A673 (cell line): ENCODE measurements at regions of chrX and their contacts with region 1.

Region 1: DNA sequence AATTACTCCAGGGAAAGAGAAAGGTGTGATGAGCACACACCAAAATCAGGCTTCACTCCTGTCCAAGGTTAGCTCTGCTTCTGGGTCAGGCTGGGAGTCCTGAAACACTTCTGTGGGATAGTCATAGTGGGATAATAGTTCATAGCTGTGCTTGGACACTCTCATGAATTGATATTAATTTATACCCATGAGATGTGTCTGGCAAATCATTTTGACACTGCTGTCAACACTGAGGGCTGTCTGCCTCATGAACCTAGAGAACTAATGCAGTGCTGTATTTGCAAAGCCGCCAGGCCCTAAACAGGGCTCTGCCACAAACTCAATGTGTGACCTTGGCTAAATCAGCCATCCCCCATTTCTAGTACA is 24.5 kb upstream of the PGRMC1 start:
- DNase-seq: no peak
- H3K4me3 ChIP-seq: no peak overlapping the region
- H3K27ac ChIP-seq: no peak overlapping the region
- H3K4me1 ChIP-seq: no peaks in the 10 kb centered on the region
- H3K27me3 ChIP-seq: peaks cover 12% of the 10 kb centered on the region
- CTCF ChIP-seq: no peak

Region 2: GRCh38 chrX:118847676-118848075 is 364.0 kb before region 1 on chrX:
- CTCF ChIA-PET with region 1: no interaction called
- POLR2A ChIA-PET with region 1: no interaction called
- intact Hi-C with region 1: loop called (anchors 5 kb)
- DNase-seq: peak; percentile 72
- H3K4me3 ChIP-seq: no peak overlapping the region
- H3K27ac ChIP-seq: no peak overlapping the region
- H3K4me1 ChIP-seq: no peaks in the 10 kb centered on the region
- H3K27me3 ChIP-seq: no peaks in the 10 kb centered on the region
- CTCF ChIP-seq: peak; percentile 71

Region 3: DNA sequence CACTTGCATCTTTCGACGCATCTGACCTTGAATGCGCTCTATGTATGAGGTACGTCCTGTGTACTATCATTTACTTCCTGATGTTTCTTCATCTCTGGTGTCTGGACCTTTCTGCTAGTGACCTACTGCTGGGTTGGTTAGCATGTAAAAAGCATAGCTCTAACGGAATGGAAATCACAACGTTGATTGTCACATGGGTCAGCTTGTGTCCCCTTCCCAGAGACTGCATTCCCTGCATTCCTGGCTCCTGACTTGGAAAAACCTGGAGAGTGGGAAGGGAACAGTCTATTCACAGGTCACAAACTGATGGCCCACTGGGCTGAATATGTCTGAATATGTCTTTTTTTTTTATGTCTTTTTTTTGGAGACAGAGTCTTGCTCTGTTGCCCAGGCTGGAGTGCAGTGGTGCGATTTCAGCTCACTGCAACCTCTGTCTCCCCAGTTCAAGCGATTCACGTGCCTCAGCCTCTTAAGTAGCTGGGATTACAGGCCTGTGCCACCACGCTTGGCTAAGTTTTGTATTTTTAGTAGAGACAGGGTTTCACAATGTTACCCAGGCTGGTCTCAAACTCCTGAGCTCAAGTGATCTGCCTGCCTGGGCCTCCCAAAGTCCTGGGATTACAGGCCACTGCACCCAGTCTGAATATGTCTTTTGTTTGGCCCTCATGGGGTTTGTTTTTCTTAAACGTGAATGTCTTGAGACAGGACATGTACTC is 221.0 kb before region 1 on chrX:
- CTCF ChIA-PET with region 1: no interaction called
- POLR2A ChIA-PET with region 1: no interaction called
- intact Hi-C with region 1: no loop called
- DNase-seq: no peak
- H3K4me3 ChIP-seq: no peak overlapping the region
- H3K27ac ChIP-seq: no peak overlapping the region
- H3K4me1 ChIP-seq: no peaks in the 10 kb centered on the region
- H3K27me3 ChIP-seq: no peaks in the 10 kb centered on the region
- CTCF ChIP-seq: no peak

Region 4: DNA sequence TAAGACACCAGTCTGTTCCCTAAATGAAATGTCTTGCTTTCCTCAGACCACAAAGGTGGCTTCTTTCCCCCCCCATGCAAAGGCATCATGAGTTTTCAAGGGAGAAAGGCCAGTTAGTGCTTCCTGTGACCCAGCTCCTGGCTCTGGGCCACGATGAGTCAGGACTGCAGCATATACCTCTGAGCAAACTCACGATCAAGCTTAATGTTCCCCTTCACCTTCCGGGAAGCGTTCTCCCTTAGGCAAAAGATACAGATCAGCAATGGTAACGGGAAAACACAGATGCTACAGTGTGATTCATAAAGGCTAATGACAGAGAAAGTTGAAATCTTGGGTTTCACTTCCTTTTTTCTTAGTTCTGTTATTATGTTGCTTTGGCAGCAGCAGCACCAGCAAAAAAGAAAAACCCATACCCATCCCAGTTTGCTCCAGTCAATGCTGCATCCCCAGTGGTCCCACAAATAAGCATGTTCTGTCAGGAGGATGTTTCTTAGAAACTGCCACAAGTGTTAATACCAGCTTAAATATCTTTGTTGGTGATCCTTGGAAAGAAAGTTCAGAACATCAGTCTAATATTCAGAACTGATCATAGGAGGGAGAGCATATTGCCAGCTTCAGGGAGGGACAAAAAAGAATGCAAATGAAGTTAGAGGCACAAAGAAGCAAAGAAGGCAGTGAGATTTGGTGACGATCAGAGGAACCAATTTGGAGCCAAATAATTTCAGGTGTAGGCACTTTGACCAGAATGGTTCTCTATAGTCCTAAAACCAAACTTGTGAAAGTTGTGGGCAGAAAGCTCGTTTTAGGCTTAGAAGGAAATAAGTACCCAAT is 196.0 kb before region 1 on chrX:
- CTCF ChIA-PET with region 1: no interaction called
- POLR2A ChIA-PET with region 1: no interaction called
- intact Hi-C with region 1: loop called (anchors 10 kb)
- DNase-seq: no peak
- H3K4me3 ChIP-seq: no peak overlapping the region
- H3K27ac ChIP-seq: no peak overlapping the region
- H3K4me1 ChIP-seq: no peaks in the 10 kb centered on the region
- H3K27me3 ChIP-seq: no peaks in the 10 kb centered on the region
- CTCF ChIP-seq: no peak

Region 5: DNA sequence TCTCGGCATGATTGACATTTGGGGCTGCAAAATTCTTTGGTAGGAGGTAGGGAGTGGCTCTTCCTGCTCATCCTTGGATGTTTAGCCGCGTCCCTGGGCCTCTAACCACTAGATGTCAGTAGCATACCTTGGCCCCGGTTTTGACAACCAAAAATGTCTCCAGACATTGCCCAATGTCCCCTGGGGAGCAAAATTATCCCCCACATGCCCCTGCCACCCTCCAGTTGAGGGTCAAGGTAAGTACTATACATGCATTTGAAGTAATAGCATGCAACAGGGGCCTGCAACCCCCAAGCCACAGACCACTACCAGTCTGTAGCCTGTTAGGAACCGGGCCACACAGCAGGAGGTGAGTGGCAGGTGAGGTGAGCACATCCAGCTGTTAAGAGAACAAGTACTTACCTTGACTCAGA is 66.4 kb before region 1 on chrX:
- CTCF ChIA-PET with region 1: no interaction called
- POLR2A ChIA-PET with region 1: no interaction called
- intact Hi-C with region 1: loop called (anchors 10 kb)
- DNase-seq: peak; percentile 21
- H3K4me3 ChIP-seq: no peak overlapping the region
- H3K27ac ChIP-seq: no peak overlapping the region
- H3K4me1 ChIP-seq: no peaks in the 10 kb centered on the region
- H3K27me3 ChIP-seq: no peaks in the 10 kb centered on the region
- CTCF ChIP-seq: peak; percentile 41; the same call in 1 of the 2 replicates

Region 6: DNA sequence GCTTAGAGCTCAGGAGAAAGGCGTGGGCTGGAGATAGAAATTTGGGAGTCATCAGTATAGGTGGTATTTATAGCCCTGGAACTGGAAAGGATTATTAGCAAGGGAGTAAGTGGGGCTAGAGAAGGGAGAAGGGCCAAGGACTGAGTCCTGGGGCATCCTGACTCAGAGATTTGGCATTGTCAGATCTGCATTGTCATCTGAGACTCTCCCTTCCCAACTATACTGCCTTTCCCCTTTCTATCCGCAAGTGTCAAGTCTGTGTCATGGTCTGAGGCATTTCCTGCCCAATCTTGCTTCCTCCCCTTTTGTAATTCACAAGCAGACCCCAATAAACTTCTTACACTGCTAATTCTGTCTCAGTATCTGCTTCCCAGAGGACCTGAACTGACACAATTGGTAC is 163.1 kb after region 1 on chrX:
- CTCF ChIA-PET with region 1: no interaction called
- POLR2A ChIA-PET with region 1: no interaction called
- intact Hi-C with region 1: no loop called
- DNase-seq: no peak
- H3K4me3 ChIP-seq: no peak overlapping the region
- H3K27ac ChIP-seq: no peak overlapping the region
- H3K4me1 ChIP-seq: no peaks in the 10 kb centered on the region
- H3K27me3 ChIP-seq: no peaks in the 10 kb centered on the region
- CTCF ChIP-seq: no peak